Activated CD4-positive, alpha-beta memory T cell treated with anti-CD3 and anti-CD28 coated beads for 36 hours (primary cell): ENCODE measurements at regions of chr1 and their contacts with region 1.

Region 1: GRCh38 chr1:54950369-54951163 is 29.9 kb upstream of the TMEM61 start:
- DNase-seq: peak; percentile 73
- H3K4me3 Mint-ChIP-seq: no peak overlapping the region
- H3K27ac Mint-ChIP-seq: no peak overlapping the region
- H3K4me1 Mint-ChIP-seq: peaks cover 9% of the 10 kb centered on the region
- H3K27me3 Mint-ChIP-seq: peaks cover 2% of the 10 kb centered on the region

Region 2: GRCh38 chr1:54886724-54887664 is 63.6 kb before region 1 on chr1 and contains the start of gene DHCR24:
- CTCF ChIA-PET with region 1: interaction called, 8 read pairs
- POLR2A ChIA-PET with region 1: no interaction called
- intact Hi-C with region 1: loop called (anchors 5 kb)
- DNase-seq: peak; percentile 83
- H3K4me3 Mint-ChIP-seq: peak within 1 kb of the TSS; percentile 92
- H3K27ac Mint-ChIP-seq: peak within 1 kb of the TSS; percentile 84
- H3K4me1 Mint-ChIP-seq: peaks cover 47% of the 10 kb centered on the region
- H3K27me3 Mint-ChIP-seq: peaks cover 2% of the 10 kb centered on the region
- total RNA-seq, gene DHCR24: 72.6 to 75.1 TPM

Region 3: DNA sequence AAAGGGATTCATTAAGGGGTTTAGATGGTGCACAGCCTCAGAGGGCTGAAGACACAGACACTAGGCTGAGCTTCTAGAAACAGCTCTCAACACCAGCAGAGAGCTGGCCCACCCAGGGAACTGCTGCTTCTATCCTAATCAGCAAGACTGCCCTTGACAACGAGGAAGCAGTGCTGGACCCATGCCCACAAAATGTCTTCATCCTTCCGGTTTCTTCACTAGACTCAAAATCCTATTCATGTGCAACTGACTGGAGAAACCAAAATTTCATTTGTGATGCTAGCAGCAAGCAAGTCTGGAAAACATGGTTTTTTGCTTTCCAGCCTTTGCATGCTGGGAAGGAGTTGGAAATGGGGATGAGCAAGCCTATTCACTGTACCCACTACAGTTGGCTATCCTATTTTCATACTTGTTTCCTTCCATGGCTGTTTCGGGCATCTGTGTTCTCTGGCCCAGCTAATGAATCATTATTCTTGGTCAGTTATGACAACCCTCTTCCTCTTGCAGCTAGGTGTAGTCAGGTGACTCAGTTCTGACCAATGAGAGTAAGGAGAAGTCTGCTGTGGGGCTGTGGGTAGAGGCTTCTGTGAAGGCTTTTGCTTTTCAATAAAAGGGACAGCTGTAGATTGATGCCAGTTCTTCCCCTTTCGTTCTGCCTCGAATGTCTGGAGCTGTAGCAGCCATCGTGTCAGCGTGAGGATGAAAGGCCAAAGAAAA is 15.2 kb after region 1 on chr1:
- CTCF ChIA-PET with region 1: interaction called, 11 read pairs
- POLR2A ChIA-PET with region 1: no interaction called
- intact Hi-C with region 1: no loop called
- DNase-seq: no peak
- H3K4me3 Mint-ChIP-seq: no peak overlapping the region
- H3K27ac Mint-ChIP-seq: no peak overlapping the region
- H3K4me1 Mint-ChIP-seq: peaks cover 8% of the 10 kb centered on the region
- H3K27me3 Mint-ChIP-seq: peaks cover 20% of the 10 kb centered on the region

Region 4: GRCh38 chr1:55021965-55022546 is 71.5 kb after region 1 on chr1:
- CTCF ChIA-PET with region 1: interaction called, 152 read pairs
- POLR2A ChIA-PET with region 1: no interaction called
- intact Hi-C with region 1: loop called (anchors 1 kb)
- DNase-seq: peak; percentile 80
- H3K4me3 Mint-ChIP-seq: no peak overlapping the region
- H3K27ac Mint-ChIP-seq: no peak overlapping the region
- H3K4me1 Mint-ChIP-seq: peaks cover 3% of the 10 kb centered on the region
- H3K27me3 Mint-ChIP-seq: peaks cover 11% of the 10 kb centered on the region

Region 5: GRCh38 chr1:55338448-55338820 is 387.9 kb after region 1 on chr1:
- CTCF ChIA-PET with region 1: no interaction called
- POLR2A ChIA-PET with region 1: no interaction called
- intact Hi-C with region 1: no loop called
- DNase-seq: peak; percentile 36
- H3K4me3 Mint-ChIP-seq: no peak overlapping the region
- H3K27ac Mint-ChIP-seq: no peak overlapping the region
- H3K4me1 Mint-ChIP-seq: no peaks in the 10 kb centered on the region
- H3K27me3 Mint-ChIP-seq: peaks cover 5% of the 10 kb centered on the region